Breast epithelium (tissue), 4 donors: ENCODE measurements at regions of chr21 and their contacts with region 1.

Region 1: GRCh38 chr21:43959231-43960116 is 52.6 kb upstream of the TRAPPC10 start:
- DNase-seq: no peak
- H3K4me3 ChIP-seq: no peak overlapping the region
- H3K27ac ChIP-seq: no peak overlapping the region
- H3K4me1 ChIP-seq: peaks cover 0 to 6% of the 10 kb centered on the region in 2 donors
- H3K27me3 ChIP-seq: no peaks in the 10 kb centered on the region
- CTCF ChIP-seq: no peak
- POLR2A ChIP-seq: no peak

Region 2: GRCh38 chr21:42858185-42858847 is 1101.2 kb before region 1 on chr21:
- intact Hi-C with region 1: loop called (anchors 5 kb)
- DNase-seq: no peak
- H3K4me3 ChIP-seq: no peak overlapping the region
- H3K27ac ChIP-seq: no peak overlapping the region
- H3K4me1 ChIP-seq: no peaks in the 10 kb centered on the region
- H3K27me3 ChIP-seq: no peaks in the 10 kb centered on the region
- CTCF ChIP-seq: no peak
- POLR2A ChIP-seq: no peak

Region 3: GRCh38 chr21:43810505-43811261 is 148.8 kb before region 1 on chr21:
- intact Hi-C with region 1: loop called (anchors 10 kb)
- DNase-seq: peak; percentile 60 to 83
- H3K4me3 ChIP-seq: peak overlapping the region in 2 of 3 donors; percentile 39 to 63
- H3K27ac ChIP-seq: no peak overlapping the region
- H3K4me1 ChIP-seq: peaks cover 0 to 13% of the 10 kb centered on the region in 2 donors
- H3K27me3 ChIP-seq: no peaks in the 10 kb centered on the region
- CTCF ChIP-seq: peak; percentile 87 to 93 (median 89)
- POLR2A ChIP-seq: no peak